CD8-positive, alpha-beta T cell (primary cell): ENCODE measurements at regions of chr22 and their contacts with region 1.

Region 1: DNA sequence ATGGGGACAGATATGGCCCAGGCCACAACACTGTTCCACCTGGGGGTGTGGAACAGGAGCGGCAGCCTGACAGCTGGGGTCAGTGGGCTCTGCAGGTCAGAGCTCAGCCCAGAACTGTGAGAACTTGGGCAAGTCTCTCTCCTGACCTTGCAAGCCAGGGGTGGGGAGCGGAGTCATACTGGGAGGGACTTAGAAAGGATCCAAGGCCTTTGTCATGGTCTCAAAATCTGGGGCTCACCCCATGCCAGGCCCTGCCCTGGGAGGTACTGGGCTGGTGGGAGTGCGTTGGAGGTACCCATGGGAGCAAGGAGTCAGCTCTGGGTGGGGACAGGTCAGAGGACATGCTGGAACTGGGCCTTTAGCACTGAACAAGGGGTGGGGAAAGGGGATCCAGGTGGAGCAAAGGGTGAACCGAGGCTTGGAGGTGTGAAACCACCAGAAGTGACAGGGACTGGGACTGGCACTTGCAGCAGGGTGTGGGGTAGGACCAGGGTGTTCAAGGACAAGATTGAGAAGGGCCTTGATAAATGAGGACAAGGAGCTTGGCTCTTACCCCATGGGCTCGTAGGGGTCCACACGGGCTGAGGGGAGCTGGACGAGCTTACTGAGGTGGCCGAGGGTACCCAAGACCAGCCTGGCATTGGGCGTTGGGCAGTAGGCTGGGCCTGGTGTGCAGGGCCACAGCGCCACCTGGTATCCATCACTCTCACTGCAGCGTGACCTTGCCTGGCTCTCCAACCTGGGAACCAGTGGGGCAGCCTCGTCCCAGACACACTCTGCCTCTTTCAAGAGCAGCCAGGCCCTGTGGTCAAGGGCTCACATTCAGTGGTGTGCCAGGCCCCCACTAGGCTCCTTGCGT is 7.4 kb upstream of the PMM1 start:
- DNase-seq: peak in 6 of 9 experiments; percentile 4 to 53 (median 36)
- ATAC-seq: peak; percentile 64
- H3K4me3 ChIP-seq: no peak overlapping the region
- H3K4me3 Mint-ChIP-seq: no peak overlapping the region
- H3K27ac ChIP-seq: no peak overlapping the region
- H3K27ac Mint-ChIP-seq: no peak overlapping the region
- H3K4me1 ChIP-seq: no peaks in the 10 kb centered on the region
- H3K4me1 Mint-ChIP-seq: peaks cover 2% of the 10 kb centered on the region
- H3K27me3 ChIP-seq: no peaks in the 10 kb centered on the region
- H3K27me3 Mint-ChIP-seq: no peaks in the 10 kb centered on the region
- CTCF ChIP-seq: peak; percentile 45

Region 2: DNA sequence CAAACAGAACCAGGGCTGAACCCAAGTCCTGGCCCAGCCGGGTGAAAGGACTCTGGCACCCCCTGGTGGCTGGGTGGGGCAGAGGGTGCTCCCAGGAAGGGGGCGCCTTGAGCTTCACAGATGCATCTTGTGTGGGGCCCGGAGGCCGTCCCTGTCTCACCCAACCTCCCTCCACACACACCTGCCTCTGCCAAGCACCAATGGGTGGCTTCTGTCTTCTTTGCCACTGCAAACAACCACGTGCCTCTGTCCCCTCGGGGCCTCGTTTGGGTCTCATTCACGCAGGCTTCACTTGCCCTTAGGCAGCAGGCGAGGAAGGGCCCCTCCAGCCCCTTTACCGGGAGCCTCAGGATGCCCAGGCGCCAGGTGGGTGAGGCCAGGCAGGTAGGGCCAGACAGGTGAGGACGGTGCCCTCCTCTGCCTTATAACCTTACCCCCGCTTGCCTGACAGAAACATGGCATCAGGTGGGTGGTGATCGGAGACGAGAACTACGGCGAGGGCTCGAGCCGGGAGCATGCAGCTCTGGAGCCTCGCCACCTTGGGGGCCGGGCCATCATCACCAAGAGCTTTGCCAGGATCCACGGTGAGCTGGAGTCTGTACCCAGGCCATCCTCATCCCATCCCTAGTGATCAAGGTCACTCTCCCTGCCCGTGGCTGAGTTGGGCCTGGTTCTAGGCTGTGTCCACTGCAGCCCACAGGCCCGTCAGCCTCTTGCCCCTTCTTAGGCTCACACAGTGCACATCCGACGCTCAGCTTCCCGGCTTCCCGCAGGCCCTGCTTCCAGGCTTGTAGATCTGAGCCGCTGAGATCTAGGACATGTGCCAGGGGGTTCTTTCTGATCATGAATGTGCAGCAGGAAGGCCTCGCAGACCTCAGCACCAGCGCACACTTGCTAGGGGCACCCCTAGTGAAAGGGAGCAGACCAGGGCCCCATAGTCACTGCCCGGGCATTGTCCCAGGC is 69.9 kb before region 1 on chr22:
- CTCF ChIA-PET with region 1: no interaction called
- POLR2A ChIA-PET with region 1: no interaction called
- intact Hi-C with region 1: loop called in 1 of 2 experiments (anchors 1 kb)
- DNase-seq: peak; percentile 49 to 82 (median 72)
- ATAC-seq: peak; percentile 74
- H3K4me3 ChIP-seq: no peak overlapping the region
- H3K4me3 Mint-ChIP-seq: no peak overlapping the region
- H3K27ac ChIP-seq: peak overlapping the region in 1 of 2 experiments; percentile 42
- H3K27ac Mint-ChIP-seq: peak overlapping the region; percentile 70
- H3K4me1 ChIP-seq: peaks cover 19% of the 10 kb centered on the region
- H3K4me1 Mint-ChIP-seq: peaks cover 15% of the 10 kb centered on the region
- H3K27me3 ChIP-seq: no peaks in the 10 kb centered on the region
- H3K27me3 Mint-ChIP-seq: no peaks in the 10 kb centered on the region
- CTCF ChIP-seq: peak; percentile 71

Region 3: DNA sequence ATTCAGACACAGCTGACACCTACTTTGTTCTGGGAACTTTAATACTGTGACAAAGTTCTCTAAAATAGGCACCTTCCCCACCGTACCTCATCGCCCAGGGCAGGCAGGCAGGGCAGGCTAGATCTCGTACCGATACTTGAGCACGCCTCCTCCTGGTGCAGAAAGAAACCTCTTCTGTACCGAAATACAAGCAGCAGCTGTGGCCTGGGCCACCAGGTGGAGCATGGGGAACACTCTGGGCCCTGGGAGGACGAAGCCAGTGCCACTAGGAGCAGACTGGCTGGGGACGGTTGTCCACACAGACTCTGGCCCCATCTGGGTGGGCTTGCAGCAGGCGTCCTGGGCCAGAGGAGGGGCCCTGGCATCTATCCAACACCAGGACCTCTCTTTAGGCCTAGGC is 20.1 kb before region 1 on chr22:
- CTCF ChIA-PET with region 1: interaction called, 4 read pairs
- POLR2A ChIA-PET with region 1: no interaction called
- intact Hi-C with region 1: loop called in 1 of 2 experiments (anchors 1 kb)
- DNase-seq: peak in 5 of 9 experiments; percentile 23 to 53 (median 39)
- ATAC-seq: peak; percentile 61
- H3K4me3 ChIP-seq: no peak overlapping the region
- H3K4me3 Mint-ChIP-seq: no peak overlapping the region
- H3K27ac ChIP-seq: no peak overlapping the region
- H3K27ac Mint-ChIP-seq: no peak overlapping the region
- H3K4me1 ChIP-seq: no peaks in the 10 kb centered on the region
- H3K4me1 Mint-ChIP-seq: no peaks in the 10 kb centered on the region
- H3K27me3 ChIP-seq: no peaks in the 10 kb centered on the region
- H3K27me3 Mint-ChIP-seq: no peaks in the 10 kb centered on the region
- CTCF ChIP-seq: no peak

Region 4: DNA sequence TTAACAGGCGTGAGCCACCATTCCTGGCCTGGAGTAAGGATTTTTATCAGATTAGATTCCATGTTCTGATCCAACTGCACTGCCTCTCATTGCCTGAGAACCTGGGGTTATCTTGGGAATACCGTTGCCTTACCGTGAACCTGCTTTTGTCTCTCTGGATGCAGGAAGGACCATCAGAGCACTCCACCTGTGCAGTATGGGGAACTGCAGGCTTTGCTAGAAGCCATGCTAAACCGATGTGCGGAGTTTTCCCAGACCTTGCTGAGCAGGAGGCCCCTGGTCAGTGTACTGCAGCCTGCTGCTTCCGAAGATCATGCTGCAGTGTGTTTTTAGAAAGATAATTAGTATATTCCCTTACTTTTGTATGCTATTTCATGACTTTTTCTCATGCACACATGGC is 145.9 kb after region 1 on chr22:
- CTCF ChIA-PET with region 1: no interaction called
- POLR2A ChIA-PET with region 1: no interaction called
- intact Hi-C with region 1: no loop called
- DNase-seq: no peak
- ATAC-seq: no peak
- H3K4me3 ChIP-seq: no peak overlapping the region
- H3K4me3 Mint-ChIP-seq: no peak overlapping the region
- H3K27ac ChIP-seq: no peak overlapping the region
- H3K27ac Mint-ChIP-seq: no peak overlapping the region
- H3K4me1 ChIP-seq: no peaks in the 10 kb centered on the region
- H3K4me1 Mint-ChIP-seq: peaks cover 7% of the 10 kb centered on the region
- H3K27me3 ChIP-seq: no peaks in the 10 kb centered on the region
- H3K27me3 Mint-ChIP-seq: peaks cover 6% of the 10 kb centered on the region
- CTCF ChIP-seq: no peak

Region 5: DNA sequence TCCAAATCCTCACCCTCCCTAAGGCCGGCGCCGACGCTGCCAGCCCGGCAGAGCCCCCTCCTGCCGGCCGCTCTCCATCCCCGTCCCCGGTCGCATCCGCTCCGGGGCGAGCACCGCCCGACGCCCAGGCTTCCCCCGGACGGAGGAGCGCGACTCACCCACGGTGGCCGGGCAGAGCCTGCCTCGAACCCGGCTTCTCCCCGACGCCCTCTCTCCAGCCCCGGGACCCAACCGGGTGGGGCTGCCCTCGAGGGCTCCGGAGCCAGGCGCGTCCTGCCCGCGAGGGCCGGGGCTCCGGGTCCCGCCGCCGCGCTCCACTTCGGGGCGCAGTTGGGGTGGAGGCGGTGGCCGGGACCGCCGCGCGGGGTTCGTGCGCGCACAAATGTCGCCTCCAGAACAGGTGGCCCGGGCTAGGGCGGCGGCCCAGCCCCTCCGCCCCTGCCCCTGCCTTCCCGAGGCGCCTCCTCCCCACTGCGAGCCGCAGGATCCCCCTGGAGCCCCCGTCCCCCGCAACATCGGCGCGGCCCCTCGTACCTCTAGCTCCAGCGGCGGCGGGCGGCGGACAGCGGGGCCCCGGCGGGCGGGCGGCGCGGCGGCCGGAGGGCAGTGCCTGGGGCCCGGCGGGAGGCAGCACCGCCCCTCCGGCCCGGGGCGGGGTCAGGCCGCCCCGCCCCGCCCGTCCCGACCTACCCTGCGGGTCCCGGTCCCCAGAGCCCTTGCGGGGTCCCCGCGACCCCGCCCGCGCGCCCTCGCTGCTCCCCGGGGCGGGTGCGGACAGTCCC is 1123.4 kb after region 1 on chr22 and contains the start of gene A4GALT:
- CTCF ChIA-PET with region 1: no interaction called
- POLR2A ChIA-PET with region 1: no interaction called
- intact Hi-C with region 1: no loop called
- DNase-seq: no peak
- ATAC-seq: no peak
- H3K4me3 ChIP-seq: no peak within 1 kb of the TSS
- H3K4me3 Mint-ChIP-seq: peak within 1 kb of the TSS; percentile 74
- H3K27ac ChIP-seq: no peak within 1 kb of the TSS
- H3K27ac Mint-ChIP-seq: no peak within 1 kb of the TSS
- H3K4me1 ChIP-seq: peaks cover 8% of the 10 kb centered on the region
- H3K4me1 Mint-ChIP-seq: peaks cover 15% of the 10 kb centered on the region
- H3K27me3 ChIP-seq: peaks cover 12 to 17% of the 10 kb centered on the region in 2 experiments
- H3K27me3 Mint-ChIP-seq: peaks cover 55% of the 10 kb centered on the region
- CTCF ChIP-seq: no peak
- total RNA-seq, gene A4GALT: not detected